Psoas muscle (tissue), 8 donors: ENCODE measurements at regions of chr7 and their contacts with region 1.

Region 1: DNA sequence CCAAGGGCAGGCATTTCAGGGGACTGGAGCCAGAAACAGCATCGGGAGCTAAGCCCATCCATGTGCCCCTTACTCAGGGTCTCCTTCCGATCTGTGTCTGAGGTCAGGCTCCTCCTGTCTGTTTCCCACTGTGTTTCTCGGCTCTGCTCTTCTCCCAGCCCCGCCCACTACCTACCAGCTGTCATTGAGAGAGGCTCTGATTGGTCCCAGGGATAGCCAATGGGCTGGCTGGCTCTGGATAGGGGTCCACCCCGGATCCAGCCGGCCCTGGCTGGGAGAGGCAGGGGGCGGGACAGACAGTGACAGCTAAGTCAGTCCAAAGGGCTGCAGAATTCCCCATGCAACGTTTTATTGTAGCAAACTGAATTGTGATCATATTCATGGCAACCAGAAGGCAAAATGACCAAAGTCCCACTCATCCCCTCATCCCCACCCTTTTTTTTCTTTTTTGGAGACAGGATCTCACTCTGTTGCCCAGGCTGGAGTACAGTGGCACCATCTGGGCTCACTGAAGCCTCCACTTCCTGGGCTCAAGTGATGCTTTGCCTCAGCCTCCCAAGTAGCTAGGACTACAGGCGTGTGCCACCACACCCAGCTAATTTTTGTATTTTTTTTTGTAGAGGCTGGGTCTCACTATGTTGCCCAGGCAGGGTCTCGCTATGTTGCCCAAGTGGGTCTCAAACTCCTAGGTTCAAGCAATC is 76.3 kb downstream of the CLIP2 start:
- DNase-seq: peak; percentile 38 to 67
- ATAC-seq: peak; percentile 37 to 73 (median 53)
- H3K4me3 ChIP-seq: no peak overlapping the region
- H3K27ac ChIP-seq: no peak overlapping the region
- H3K4me1 ChIP-seq: no peaks in the 10 kb centered on the region
- H3K27me3 ChIP-seq: no peaks in the 10 kb centered on the region
- CTCF ChIP-seq: no peak

Region 2: GRCh38 chr7:74317146-74317782 is 48.2 kb before region 1 on chr7:
- intact Hi-C with region 1: loop called in 1 of 2 experiments (anchors 5 kb)
- DNase-seq: no peak
- ATAC-seq: no peak
- H3K4me3 ChIP-seq: no peak overlapping the region
- H3K27ac ChIP-seq: no peak overlapping the region
- H3K4me1 ChIP-seq: no peaks in the 10 kb centered on the region
- H3K27me3 ChIP-seq: peaks cover 0 to 3% (median 0%) of the 10 kb centered on the region in 3 donors
- CTCF ChIP-seq: no peak